Ascending aorta (tissue), 2 donors: ENCODE measurements at regions of chr7 and their contacts with region 1.

Region 1: GRCh38 chr7:97027427-97028234 is 3.0 kb upstream of the DLX5 start:
- DNase-seq: peak in 1 of 2 donors; percentile 84
- H3K4me3 ChIP-seq: peak overlapping the region; percentile 46 to 64
- H3K27ac ChIP-seq: no peak overlapping the region
- H3K4me1 ChIP-seq: peaks cover 13 to 16% of the 10 kb centered on the region in 2 donors
- H3K27me3 ChIP-seq: no peaks in the 10 kb centered on the region
- CTCF ChIP-seq: peak; percentile 69 to 86 (median 81)

Region 2: DNA sequence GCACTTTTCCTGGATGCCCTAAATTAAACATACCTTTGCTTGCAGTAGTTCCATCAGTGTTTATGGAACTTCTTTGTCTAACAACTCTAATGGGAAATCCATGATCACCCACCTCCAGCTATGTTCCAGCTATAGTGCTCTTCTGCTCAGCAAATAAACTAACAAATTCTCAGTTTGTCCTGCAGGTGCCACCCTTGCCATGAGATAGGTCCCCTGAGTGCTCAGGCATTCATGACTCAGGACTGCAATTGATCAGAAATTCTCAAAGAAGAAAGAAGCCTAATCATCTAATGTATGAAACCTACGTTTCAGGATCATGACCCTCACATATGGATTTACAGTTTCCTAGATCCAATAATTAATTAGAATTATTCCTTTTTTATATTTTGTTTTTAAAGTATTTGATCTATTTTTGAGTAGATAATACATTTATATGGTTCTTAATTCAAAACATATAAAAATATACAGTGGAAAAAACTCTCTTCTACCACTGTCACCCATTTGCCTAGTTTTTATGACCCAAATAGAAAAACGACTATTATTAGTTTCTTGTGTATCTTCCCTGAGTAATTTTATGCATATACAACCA is 1303.9 kb before region 1 on chr7:
- intact Hi-C with region 1: loop called (anchors 10 kb)
- DNase-seq: no peak
- H3K4me3 ChIP-seq: no peak overlapping the region
- H3K27ac ChIP-seq: no peak overlapping the region
- H3K4me1 ChIP-seq: no peaks in the 10 kb centered on the region
- H3K27me3 ChIP-seq: no peaks in the 10 kb centered on the region
- CTCF ChIP-seq: peak; percentile 47 to 67 (median 47)

Region 3: DNA sequence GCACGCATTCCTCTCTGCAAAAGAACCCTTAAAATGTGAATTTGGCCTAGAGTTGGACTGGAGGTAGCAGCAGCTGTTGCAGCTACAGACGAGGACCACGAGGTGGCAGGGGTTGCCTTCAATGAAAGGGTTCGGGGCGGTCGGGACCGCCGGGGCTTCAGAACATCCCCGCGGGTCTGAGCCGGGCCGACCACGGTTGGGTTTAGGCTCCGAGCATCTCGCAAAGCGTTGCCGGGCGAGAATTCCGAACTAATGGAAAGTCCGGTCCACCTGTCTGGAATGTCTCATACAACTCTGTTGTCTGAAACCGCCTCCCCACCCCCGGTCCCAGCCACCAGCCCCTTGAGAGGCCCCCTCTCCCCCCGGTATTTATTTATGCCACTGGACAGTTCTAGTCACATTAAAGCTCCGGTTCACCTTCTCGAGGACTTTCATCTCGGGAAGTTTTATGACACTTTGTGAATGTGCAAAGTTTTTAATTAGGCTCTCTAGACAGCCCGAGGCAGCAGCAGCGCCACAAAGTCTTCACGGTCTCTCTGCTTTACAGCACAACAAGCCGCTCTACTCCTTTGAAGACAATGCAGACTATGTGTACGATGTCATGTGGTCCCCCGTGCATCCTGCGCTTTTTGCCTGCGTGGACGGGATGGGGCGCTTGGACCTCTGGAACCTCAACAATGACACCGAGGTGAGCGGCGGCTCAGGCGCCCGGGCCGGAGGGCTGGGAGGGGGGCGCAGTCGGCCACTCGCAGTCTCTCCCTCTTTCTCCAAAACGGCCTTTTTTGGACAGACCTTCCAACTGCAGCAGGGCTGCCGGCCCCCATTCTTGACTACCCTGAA is 951.9 kb before region 1 on chr7:
- intact Hi-C with region 1: loop called (anchors 1 kb)
- DNase-seq: peak in 1 of 2 donors; percentile 69
- H3K4me3 ChIP-seq: peak overlapping the region; percentile 54 to 72
- H3K27ac ChIP-seq: no peak overlapping the region
- H3K4me1 ChIP-seq: peaks cover 0 to 2% of the 10 kb centered on the region in 2 donors
- H3K27me3 ChIP-seq: no peaks in the 10 kb centered on the region
- CTCF ChIP-seq: peak; percentile 67 to 88 (median 75)

Region 4: DNA sequence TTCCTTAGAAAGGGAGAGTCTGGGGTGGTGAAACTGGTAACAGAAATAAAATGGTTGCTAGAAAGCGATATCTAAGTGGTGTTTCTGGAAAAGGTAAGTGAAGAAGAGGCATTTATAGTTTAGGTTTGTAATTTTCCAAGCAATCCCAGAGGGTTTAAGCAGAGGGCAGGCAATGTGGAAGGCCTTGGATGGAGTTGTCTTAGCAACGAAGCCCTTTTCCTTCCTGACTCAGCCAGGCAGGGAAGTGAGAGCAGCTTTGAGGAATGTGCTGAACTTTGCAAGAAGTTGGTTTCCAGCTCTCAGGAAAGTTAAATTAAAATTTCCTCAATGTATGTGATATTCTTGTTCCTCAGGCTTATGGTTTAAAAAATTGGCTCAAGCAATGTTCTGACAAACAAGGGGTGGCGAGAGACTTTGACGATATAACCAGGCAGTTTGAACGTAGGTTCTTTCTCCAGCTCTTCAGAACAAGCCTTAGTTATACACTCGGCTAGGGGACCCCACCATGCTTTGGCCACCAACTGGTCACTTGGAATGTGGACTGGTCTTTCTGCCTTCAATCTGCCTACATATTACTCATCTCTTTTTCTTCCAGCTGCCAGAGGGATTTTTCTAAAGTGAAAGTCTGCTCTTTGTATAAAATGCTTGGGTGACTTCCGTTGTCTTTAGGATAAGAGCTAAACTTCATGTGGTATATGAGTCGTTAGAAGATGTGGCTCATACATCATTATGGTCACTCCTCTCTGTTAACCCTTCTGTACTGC is 638.8 kb before region 1 on chr7:
- intact Hi-C with region 1: loop called (anchors 10 kb)
- DNase-seq: no peak
- H3K4me3 ChIP-seq: peak overlapping the region in 1 of 2 donors; percentile 8
- H3K27ac ChIP-seq: peak overlapping the region; percentile 16 to 62
- H3K4me1 ChIP-seq: peaks cover 0 to 8% of the 10 kb centered on the region in 2 donors
- H3K27me3 ChIP-seq: no peaks in the 10 kb centered on the region
- CTCF ChIP-seq: no peak

Region 5: GRCh38 chr7:96989241-96989858 is 38.3 kb before region 1 on chr7:
- intact Hi-C with region 1: loop called (anchors 5 kb)
- DNase-seq: no peak
- H3K4me3 ChIP-seq: no peak overlapping the region
- H3K27ac ChIP-seq: no peak overlapping the region
- H3K4me1 ChIP-seq: peaks cover 0 to 3% of the 10 kb centered on the region in 2 donors
- H3K27me3 ChIP-seq: peaks cover 24% of the 10 kb centered on the region
- CTCF ChIP-seq: no peak